ENCODE measurements at regions of chr18 and their contacts with region 1.

Region 1: DNA sequence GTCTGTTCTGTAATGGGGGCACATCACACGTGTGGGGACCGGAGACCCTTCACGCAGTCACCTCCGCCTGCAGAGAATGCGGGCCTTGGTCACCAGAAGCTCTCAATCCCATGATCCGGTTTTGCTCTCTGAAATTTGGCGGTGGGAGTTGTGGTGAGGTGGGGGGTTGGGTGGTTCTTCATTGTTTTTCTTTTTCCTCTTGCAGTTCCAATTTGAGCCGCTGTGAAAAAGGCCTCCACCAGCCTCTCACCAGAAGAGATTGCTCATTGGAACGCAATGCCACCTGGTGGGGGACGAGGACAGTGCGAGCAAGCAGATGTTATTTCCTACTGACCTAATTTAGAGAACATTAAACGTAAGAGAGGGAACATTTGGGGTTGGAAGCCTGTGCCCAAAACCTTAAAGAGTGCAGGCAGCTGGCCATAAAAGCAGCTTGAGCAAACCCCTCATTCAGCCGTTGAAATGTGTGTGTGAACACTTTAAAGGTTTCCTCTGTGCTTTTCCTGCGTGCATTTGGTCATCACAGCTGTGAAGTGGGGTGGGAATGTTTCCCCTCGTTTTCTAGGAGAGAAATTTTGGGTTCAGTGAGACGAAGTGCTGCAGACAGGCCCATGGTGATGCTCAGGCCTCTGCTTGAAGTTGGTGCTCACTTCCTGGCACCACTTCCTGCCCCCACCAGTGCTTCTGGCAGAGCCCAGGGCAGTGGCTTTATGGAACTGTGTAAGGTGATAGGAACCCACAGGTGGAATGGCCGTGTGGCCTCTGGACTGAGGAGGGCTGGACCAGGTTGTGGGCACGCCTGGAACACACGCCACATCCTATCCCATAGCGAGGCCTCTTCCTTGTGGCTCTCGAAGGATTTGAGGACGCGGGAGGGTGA is 61.7 kb downstream of the ZCCHC2 start:
- DNase-seq: peak; percentile 84
- H3K4me3 ChIP-seq: no peak overlapping the region
- H3K27ac ChIP-seq: no peak overlapping the region
- H3K4me1 ChIP-seq: no peaks in the 10 kb centered on the region
- H3K27me3 ChIP-seq: no peaks in the 10 kb centered on the region
- CTCF ChIP-seq: peak; percentile 87 to 99 (median 98)
- POLR2A ChIP-seq: no peak

Region 2: GRCh38 chr18:62186774-62187542 is 397.5 kb before region 1 on chr18 and contains the starts of genes PIGN and RELCH:
- intact Hi-C with region 1: loop called (anchors 10 kb)
- DNase-seq: peak; percentile 99
- H3K4me3 ChIP-seq: peak within 1 kb of the TSS; percentile 75 to 98
- H3K27ac ChIP-seq: peak within 1 kb of the TSS; percentile 72 to 76
- H3K4me1 ChIP-seq: no peaks in the 10 kb centered on the region
- H3K27me3 ChIP-seq: no peaks in the 10 kb centered on the region
- CTCF ChIP-seq: peak in 2 of 4 experiments; percentile 8 to 10
- POLR2A ChIP-seq: peak; percentile 70
- total RNA-seq, gene PIGN: 30.3 to 39.6 TPM
- total RNA-seq, gene RELCH: 34.8 to 49.0 TPM

Region 3: GRCh38 chr18:62425465-62426195 is 158.9 kb before region 1 on chr18:
- intact Hi-C with region 1: loop called (anchors 2 kb)
- DNase-seq: peak; percentile 93
- H3K4me3 ChIP-seq: peak overlapping the region; percentile 13 to 19
- H3K27ac ChIP-seq: peak overlapping the region; percentile 72 to 73
- H3K4me1 ChIP-seq: no peaks in the 10 kb centered on the region
- H3K27me3 ChIP-seq: no peaks in the 10 kb centered on the region
- CTCF ChIP-seq: peak; percentile 35 to 93 (median 85)
- POLR2A ChIP-seq: no peak

Region 4: GRCh38 chr18:62982600-62983251 is 398.2 kb after region 1 on chr18:
- intact Hi-C with region 1: loop called (anchors 5 kb)
- DNase-seq: peak; percentile 62
- H3K4me3 ChIP-seq: no peak overlapping the region
- H3K27ac ChIP-seq: no peak overlapping the region
- H3K4me1 ChIP-seq: no peaks in the 10 kb centered on the region
- H3K27me3 ChIP-seq: no peaks in the 10 kb centered on the region
- CTCF ChIP-seq: peak; percentile 46 to 86 (median 84)
- POLR2A ChIP-seq: no peak

Measured in prostate gland (tissue), 2 donors.